ENCODE measurements at regions of chr20 and their contacts with region 1.

Region 1: DNA sequence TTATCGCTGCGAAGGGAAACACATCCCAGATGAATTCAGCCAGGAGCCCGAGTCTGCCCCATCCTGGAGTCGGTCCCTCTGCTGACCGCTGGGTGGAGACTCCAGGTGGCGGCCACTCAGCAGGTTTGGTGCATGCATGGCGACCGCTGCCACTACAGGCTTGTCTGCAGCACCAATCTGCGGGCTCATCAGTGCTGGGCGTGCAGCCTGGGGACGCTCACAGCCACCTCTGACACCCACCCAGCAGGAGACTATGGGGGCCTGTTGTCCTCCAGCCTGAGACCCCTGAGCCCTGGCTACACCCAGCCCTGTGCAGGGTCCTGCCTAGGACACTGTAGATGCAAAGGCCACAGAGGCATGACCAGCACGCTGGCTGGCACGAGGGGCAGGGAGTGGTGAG is 40.5 kb upstream of the GATA5 start:
- DNase-seq: no peak
- ATAC-seq: peak; percentile 93
- H3K4me3 ChIP-seq: no peak overlapping the region
- H3K27ac ChIP-seq: peak overlapping the region; percentile 57; the same call in 1 of the 2 replicates
- H3K4me1 ChIP-seq: peaks cover 8% of the 10 kb centered on the region; the same call in 1 of the 2 replicates
- H3K27me3 ChIP-seq: no peaks in the 10 kb centered on the region
- CTCF ChIP-seq: peak; percentile 92

Region 2: GRCh38 chr20:62246872-62247665 is 269.3 kb before region 1 on chr20:
- CTCF ChIA-PET with region 1: no interaction called
- POLR2A ChIA-PET with region 1: no interaction called
- in situ Hi-C with region 1: no loop called
- intact Hi-C with region 1: no loop called
- DNase-seq: no peak
- ATAC-seq: no peak
- H3K4me3 ChIP-seq: no peak overlapping the region
- H3K27ac ChIP-seq: no peak overlapping the region
- H3K4me1 ChIP-seq: no peaks in the 10 kb centered on the region
- H3K27me3 ChIP-seq: no peaks in the 10 kb centered on the region
- CTCF ChIP-seq: no peak

Region 3: DNA sequence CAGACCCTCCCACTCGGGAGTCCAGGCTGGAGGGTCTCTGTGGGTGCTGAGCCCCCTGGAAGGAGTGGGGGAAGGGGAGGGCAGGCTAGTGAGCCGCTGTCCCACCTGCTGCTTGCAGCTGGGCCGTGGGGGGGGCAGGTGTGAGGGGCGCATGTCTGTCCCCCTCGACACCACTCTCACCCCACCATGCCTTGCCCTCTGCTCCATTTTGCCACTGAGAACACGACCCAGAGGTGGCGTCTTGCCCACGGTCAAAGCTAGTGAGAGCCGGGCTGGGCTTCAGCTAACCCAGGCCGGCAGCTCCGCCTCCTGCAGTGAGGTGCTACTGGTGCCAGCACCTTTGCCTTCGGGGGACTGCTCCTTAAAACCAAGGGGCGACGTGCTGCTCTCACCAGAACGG is 92.2 kb before region 1 on chr20:
- CTCF ChIA-PET with region 1: interaction called, 13 read pairs
- POLR2A ChIA-PET with region 1: no interaction called
- in situ Hi-C with region 1: no loop called
- intact Hi-C with region 1: no loop called
- DNase-seq: no peak
- ATAC-seq: no peak
- H3K4me3 ChIP-seq: no peak overlapping the region
- H3K27ac ChIP-seq: no peak overlapping the region
- H3K4me1 ChIP-seq: no peaks in the 10 kb centered on the region; the same call in none of the 2 replicates
- H3K27me3 ChIP-seq: no peaks in the 10 kb centered on the region
- CTCF ChIP-seq: no peak

Region 4: DNA sequence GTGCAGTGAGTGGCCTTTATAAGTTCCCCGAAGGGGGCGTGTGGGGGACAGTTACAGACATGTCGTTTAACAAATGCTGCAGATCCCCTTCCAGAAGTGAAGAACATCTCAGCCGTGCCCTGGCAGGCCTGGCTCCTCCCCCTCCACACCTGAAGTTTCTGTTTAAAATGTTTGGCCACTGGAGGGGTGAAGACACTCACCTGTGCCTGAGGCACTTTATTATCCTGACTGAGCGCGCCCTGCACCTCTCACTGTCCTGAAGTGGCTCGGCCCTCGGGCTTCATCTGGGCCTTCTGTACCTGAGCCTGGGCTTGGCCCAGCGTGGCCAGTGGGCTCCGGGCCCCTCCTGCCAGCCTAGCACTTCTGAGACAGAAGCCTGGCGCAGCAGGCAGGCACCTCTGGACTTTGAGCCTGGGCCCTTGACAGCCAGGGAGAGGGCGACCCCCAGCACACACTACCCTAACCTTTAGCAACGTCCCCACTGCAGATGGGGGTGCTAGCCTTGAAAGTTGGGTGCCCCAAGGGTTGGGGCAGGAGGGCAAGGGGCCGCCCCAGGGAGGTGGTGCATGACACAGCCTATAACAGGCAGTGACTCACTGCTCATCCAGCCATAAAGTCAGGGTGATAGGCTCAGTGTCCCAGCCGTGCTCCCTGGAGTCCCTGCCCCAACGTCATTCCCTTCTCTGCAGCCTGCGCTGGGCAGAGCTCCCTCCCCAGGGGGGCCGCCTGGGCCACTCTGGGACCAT is 27.0 kb before region 1 on chr20:
- CTCF ChIA-PET with region 1: no interaction called
- POLR2A ChIA-PET with region 1: no interaction called
- in situ Hi-C with region 1: no loop called
- intact Hi-C with region 1: no loop called
- DNase-seq: no peak
- ATAC-seq: peak; percentile 83
- H3K4me3 ChIP-seq: no peak overlapping the region
- H3K27ac ChIP-seq: peak overlapping the region; percentile 84
- H3K4me1 ChIP-seq: peaks cover 84% of the 10 kb centered on the region
- H3K27me3 ChIP-seq: no peaks in the 10 kb centered on the region
- CTCF ChIP-seq: no peak

Region 5: GRCh38 chr20:62536871-62537401 is 20.6 kb after region 1 on chr20:
- CTCF ChIA-PET with region 1: no interaction called
- POLR2A ChIA-PET with region 1: no interaction called
- in situ Hi-C with region 1: no loop called
- intact Hi-C with region 1: no loop called
- DNase-seq: no peak
- ATAC-seq: no peak
- H3K4me3 ChIP-seq: no peak overlapping the region
- H3K27ac ChIP-seq: no peak overlapping the region
- H3K4me1 ChIP-seq: peaks cover 18% of the 10 kb centered on the region
- H3K27me3 ChIP-seq: no peaks in the 10 kb centered on the region
- CTCF ChIP-seq: no peak

Region 6: DNA sequence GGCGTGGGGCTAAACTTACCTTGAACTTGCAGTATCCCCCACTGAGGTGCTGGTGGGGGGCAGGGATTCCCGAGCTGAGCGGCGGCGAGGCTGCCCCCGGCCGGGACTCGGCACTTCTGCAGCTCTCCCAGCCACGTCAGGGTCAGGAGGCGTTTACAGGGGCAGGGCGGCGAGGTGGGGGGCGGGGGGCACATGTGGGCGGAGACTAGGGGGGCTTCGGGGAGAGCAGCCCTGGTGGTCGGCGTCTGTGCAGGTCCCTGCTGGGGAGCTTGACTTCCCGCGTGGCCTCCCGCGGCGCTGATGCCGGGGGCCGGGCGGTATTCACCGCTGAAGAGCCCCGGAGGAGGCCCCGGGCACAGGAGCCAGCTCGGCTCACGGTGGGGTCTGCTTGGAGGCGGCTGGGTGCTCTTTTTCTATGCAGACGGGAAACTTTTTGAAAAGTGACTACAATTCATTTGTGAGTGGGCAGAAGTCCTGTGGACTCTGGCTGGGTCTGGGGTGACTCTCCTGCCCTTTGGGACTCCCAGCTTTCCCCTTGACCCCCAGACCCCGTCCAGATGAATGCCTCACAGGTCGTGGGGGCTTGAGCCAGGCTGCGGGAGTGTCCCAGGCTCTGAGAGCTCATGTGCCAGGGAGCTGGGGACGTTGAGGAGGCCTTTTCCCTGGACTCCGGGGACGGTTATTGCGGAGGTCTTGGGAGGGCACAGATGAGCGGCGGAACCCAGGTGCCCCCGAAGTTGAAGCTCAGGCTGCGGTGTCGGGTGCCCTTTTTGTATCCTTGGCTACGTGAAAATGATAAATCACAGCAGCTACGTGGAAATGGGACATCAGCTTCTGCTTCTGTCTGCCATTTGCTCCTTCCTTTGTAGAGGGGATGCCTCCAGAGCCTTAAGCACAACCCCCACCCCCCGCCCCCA is 35.3 kb after region 1 on chr20:
- CTCF ChIA-PET with region 1: interaction called, 18 read pairs
- POLR2A ChIA-PET with region 1: interaction called, 10 read pairs
- in situ Hi-C with region 1: no loop called
- intact Hi-C with region 1: no loop called
- DNase-seq: no peak
- ATAC-seq: peak; percentile 39; the same call in 1 of the 2 replicates
- H3K4me3 ChIP-seq: peak overlapping the region; percentile 65 to 68
- H3K27ac ChIP-seq: peak overlapping the region; percentile 90
- H3K4me1 ChIP-seq: peaks cover 62% of the 10 kb centered on the region
- H3K27me3 ChIP-seq: no peaks in the 10 kb centered on the region
- CTCF ChIP-seq: no peak

Region 7: DNA sequence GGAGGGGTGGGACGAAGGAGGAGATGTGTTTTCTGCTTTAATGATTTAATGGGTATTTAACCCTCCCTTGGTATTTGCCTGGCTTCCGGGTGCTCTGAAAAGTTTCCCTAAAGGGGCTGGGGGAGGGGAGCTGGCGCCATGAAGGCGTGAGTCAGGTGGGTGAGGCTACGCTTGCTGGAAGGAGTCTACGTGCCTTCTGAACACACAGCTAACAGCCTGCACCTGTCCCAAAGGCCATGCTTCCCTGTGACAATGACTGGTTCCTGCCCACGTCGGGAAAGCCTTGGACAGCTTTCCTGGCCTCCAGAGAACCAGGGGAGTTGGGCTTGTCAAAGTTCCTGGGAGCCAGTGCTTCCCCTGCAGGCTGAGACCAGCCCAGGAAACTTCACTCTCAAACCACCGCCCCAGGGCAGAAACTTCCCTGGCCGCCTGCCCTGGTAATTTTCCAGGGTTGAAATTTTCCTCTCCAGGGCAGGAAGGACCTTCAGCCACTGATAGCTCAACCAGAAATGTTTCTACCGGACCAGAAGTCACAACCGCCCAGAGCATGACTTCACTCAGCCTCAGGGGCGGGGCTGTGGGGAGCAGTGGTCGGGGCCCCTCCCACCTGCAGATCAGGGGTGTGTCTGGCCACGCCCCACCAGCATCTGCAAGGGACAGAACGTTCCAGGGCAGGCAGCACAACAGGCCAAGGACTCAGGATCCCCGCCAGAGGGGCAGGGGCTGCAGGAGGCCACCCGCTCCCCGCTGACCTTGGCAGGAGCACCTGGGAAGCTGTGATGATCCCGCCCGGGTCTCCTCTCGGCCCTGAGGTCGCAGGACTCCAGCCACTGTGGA is 107.4 kb after region 1 on chr20:
- CTCF ChIA-PET with region 1: no interaction called
- POLR2A ChIA-PET with region 1: interaction called, 11 read pairs
- in situ Hi-C with region 1: no loop called
- intact Hi-C with region 1: no loop called
- DNase-seq: peak; percentile 72
- ATAC-seq: peak; percentile 79
- H3K4me3 ChIP-seq: peak overlapping the region in 1 of 2 experiments; percentile 28; a peak in 2 of 4 replicates
- H3K27ac ChIP-seq: peak overlapping the region; percentile 89
- H3K4me1 ChIP-seq: peaks cover 72% of the 10 kb centered on the region
- H3K27me3 ChIP-seq: no peaks in the 10 kb centered on the region
- CTCF ChIP-seq: no peak

Region 8: DNA sequence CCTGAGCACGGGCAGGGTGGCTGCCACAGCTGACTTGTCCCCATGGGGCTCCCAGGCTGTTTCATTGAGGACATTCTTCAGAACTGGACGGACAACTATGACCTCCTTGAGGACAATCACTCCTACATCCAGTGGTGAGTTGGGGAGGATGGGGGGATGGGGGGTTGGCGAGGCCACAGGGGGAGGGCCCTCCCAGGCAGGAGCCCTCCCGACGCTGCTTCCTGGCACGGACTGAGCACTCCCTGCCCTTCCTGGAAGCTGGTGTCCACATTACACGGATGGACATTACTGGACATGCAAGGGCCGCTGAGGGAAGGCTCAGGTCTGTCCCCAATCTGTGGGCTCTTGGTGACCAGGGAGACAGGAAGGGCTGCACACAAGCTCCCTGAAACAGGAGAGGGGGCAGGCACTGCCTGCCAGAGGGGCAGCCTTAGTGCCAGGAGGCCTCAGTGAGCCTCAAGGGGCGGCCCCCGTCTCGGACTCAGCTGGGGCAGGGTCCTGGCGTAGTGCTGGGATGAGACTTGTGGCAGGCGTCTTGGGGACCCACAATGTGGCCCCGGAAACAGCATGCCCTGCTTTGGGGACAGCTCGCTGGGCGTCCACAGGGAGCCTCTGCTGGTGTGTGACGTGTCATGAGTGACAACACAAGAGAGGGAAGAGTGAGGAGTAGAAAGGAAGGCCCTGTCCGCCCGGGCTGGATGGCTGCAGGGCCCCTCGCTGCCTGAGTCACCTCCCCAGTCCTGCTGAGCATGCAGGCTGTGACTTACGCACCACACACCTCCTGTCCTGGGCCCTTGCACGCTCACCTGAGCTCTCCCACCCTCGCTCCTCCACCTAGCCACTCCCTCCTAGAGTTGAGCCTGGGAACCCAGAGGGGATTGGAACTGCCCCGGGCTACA is 293.4 kb after region 1 on chr20:
- CTCF ChIA-PET with region 1: interaction called, 11 read pairs
- POLR2A ChIA-PET with region 1: no interaction called
- in situ Hi-C with region 1: no loop called
- intact Hi-C with region 1: no loop called
- DNase-seq: no peak
- ATAC-seq: no peak
- H3K4me3 ChIP-seq: no peak overlapping the region
- H3K27ac ChIP-seq: no peak overlapping the region
- H3K4me1 ChIP-seq: peaks cover 39% of the 10 kb centered on the region
- H3K27me3 ChIP-seq: no peaks in the 10 kb centered on the region
- CTCF ChIP-seq: no peak

Measured in Panc1 (cell line).